Naive thymus-derived CD4-positive, alpha-beta T cell (primary cell): ENCODE measurements at regions of chr9 and their contacts with region 1.

Region 1: DNA sequence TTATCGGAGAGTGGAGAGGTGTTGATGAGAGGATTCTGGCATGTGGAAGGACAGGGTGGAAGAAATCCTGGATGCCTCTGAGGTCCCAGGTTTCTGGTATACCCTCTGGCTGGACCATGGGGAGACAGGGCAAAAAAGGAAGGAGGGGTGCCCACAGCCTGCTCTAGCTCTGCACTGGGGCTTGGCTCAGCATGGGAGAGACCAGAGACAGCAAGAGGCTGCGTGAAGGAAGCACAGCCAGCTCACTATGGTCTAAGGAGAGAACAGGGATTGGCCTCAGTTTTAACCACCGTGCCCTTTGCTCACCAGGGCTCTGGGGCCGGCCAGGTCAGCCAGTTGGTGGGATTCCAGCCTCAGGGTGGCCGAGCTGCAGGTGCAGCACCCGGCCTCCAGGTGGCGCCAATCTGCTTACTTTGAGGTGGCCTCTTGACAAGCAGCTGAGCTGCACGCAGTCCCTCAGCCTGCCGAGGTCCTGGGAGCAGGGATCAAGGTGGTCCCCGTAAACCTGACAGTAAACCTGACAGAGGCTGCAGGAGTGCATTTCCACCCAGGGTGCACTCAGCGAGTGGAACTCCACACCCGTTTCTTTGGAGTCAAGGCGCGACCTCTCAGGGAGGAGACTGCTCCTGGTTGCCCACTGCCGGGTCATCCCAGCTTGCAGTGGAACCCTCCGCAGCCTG is 25.0 kb upstream of the SPTLC1 start:
- DNase-seq: peak; percentile 45 to 79 (median 62)
- ATAC-seq: peak; percentile 77
- H3K4me3 ChIP-seq: peak overlapping the region; percentile 34
- H3K4me3 Mint-ChIP-seq: peak overlapping the region; percentile 62 to 84 (median 76)
- H3K27ac ChIP-seq: no peak overlapping the region
- H3K27ac Mint-ChIP-seq: no peak overlapping the region
- H3K4me1 ChIP-seq: peaks cover 4 to 8% of the 10 kb centered on the region in 2 donors
- H3K4me1 Mint-ChIP-seq: peaks cover 7 to 16% (median 10%) of the 10 kb centered on the region in 7 donors
- H3K27me3 ChIP-seq: peaks cover 0 to 4% of the 10 kb centered on the region in 2 donors
- H3K27me3 Mint-ChIP-seq: peaks cover 33 to 53% (median 43%) of the 10 kb centered on the region in 5 donors

Region 2: DNA sequence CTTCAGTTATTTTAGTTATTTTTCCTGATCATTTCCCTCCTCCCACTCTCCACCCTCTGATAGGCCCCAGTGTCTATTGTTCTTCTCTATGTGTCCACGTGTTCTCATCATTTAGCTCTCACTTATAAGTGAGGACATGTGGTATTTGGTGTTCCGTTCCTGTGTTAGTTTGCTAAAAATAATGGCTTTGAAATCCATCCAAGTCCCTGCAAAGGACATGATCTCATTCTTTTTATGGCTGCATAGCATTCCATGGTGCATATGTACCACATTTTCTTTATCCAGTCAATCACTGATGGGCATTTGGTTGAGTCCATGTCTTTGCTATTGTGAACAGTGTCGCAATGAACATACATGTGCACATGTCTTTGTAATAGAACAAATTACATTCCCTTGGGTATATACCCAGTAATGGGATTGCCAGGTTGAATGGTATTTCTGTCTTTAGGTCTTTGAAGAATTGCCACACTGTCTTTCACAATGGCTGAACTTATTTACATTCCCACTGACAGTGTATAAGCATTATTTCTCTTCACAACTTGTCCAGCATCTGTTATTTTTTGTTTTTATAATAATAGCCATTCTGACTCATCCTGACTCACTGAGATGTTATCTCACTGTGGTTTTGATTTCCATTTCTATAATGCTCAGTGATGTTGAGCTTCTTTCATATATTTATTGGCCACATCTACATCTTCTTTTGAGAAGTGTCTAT is 1480.4 kb before region 1 on chr9:
- CTCF ChIA-PET with region 1: no interaction called
- POLR2A ChIA-PET with region 1: no interaction called
- intact Hi-C with region 1: no loop called
- DNase-seq: no peak
- ATAC-seq: no peak
- H3K4me3 ChIP-seq: no peak overlapping the region
- H3K4me3 Mint-ChIP-seq: no peak overlapping the region
- H3K27ac ChIP-seq: no peak overlapping the region
- H3K27ac Mint-ChIP-seq: no peak overlapping the region
- H3K4me1 ChIP-seq: no peaks in the 10 kb centered on the region
- H3K4me1 Mint-ChIP-seq: no peaks in the 10 kb centered on the region
- H3K27me3 ChIP-seq: no peaks in the 10 kb centered on the region
- H3K27me3 Mint-ChIP-seq: peaks cover 27 to 36% (median 31%) of the 10 kb centered on the region in 5 donors

Region 3: GRCh38 chr9:91560285-91560684 is 579.9 kb before region 1 on chr9:
- CTCF ChIA-PET with region 1: no interaction called
- POLR2A ChIA-PET with region 1: no interaction called
- intact Hi-C with region 1: no loop called
- DNase-seq: no peak
- ATAC-seq: no peak
- H3K4me3 ChIP-seq: no peak overlapping the region
- H3K4me3 Mint-ChIP-seq: no peak overlapping the region
- H3K27ac ChIP-seq: no peak overlapping the region
- H3K27ac Mint-ChIP-seq: no peak overlapping the region
- H3K4me1 ChIP-seq: no peaks in the 10 kb centered on the region
- H3K4me1 Mint-ChIP-seq: no peaks in the 10 kb centered on the region
- H3K27me3 ChIP-seq: no peaks in the 10 kb centered on the region
- H3K27me3 Mint-ChIP-seq: peaks cover 21 to 56% (median 43%) of the 10 kb centered on the region in 5 donors

Region 4: GRCh38 chr9:91914405-91914804 is 225.8 kb before region 1 on chr9:
- CTCF ChIA-PET with region 1: no interaction called
- POLR2A ChIA-PET with region 1: no interaction called
- intact Hi-C with region 1: no loop called
- DNase-seq: no peak
- ATAC-seq: no peak
- H3K4me3 ChIP-seq: no peak overlapping the region
- H3K4me3 Mint-ChIP-seq: no peak overlapping the region
- H3K27ac ChIP-seq: no peak overlapping the region
- H3K27ac Mint-ChIP-seq: no peak overlapping the region
- H3K4me1 ChIP-seq: no peaks in the 10 kb centered on the region
- H3K4me1 Mint-ChIP-seq: peaks cover 0 to 12% (median 0%) of the 10 kb centered on the region in 7 donors
- H3K27me3 ChIP-seq: no peaks in the 10 kb centered on the region
- H3K27me3 Mint-ChIP-seq: peaks cover 16 to 46% (median 27%) of the 10 kb centered on the region in 5 donors

Region 5: DNA sequence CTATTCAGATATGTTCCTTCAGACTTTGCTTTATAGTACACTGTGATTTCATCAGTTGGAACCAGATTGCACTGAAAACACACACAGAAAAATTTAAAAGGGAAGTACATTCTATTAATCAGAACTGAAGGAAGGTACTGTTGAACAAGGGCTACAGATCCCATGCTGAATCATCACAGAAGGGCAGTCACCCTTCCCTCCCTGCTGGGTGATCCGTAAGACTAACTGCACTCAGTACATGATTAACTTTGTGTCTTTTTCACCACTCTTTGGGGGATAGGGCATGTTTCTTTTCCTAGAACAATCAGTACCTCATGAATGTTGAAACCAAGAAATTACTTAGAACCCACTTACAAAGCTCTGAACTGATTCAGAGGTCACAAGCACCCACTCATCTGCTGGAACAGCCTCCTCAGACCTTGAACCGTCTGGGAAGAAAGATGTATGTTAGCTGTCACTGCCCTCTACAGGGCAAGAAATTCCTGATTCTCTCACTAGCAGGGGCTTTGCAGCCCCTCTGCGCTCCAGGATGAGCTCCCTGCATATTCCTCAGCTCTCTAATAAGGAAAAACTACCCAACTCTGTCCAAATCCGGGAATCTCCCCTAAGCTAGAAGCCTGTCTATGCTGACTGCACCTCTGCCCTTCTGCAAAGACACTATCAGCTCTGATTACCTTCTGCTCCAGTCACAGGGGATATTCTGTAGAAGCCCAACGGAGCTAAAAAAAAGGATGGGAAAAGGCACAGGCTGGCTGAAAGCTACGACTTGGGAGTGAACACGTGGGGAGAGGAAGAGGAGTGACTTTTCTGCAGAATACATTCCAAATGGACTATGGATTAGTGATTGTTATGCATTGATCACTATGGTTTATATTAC is 102.3 kb after region 1 on chr9:
- CTCF ChIA-PET with region 1: no interaction called
- POLR2A ChIA-PET with region 1: no interaction called
- intact Hi-C with region 1: loop called in 1 of 2 experiments (anchors 2 kb)
- DNase-seq: no peak
- ATAC-seq: no peak
- H3K4me3 ChIP-seq: no peak overlapping the region
- H3K4me3 Mint-ChIP-seq: no peak overlapping the region
- H3K27ac ChIP-seq: no peak overlapping the region
- H3K27ac Mint-ChIP-seq: peak overlapping the region in 4 of 9 donors; percentile 21 to 81 (median 32)
- H3K4me1 ChIP-seq: no peaks in the 10 kb centered on the region
- H3K4me1 Mint-ChIP-seq: peaks cover 0 to 3% (median 0%) of the 10 kb centered on the region in 7 donors
- H3K27me3 ChIP-seq: no peaks in the 10 kb centered on the region
- H3K27me3 Mint-ChIP-seq: no peaks in the 10 kb centered on the region

Region 6: DNA sequence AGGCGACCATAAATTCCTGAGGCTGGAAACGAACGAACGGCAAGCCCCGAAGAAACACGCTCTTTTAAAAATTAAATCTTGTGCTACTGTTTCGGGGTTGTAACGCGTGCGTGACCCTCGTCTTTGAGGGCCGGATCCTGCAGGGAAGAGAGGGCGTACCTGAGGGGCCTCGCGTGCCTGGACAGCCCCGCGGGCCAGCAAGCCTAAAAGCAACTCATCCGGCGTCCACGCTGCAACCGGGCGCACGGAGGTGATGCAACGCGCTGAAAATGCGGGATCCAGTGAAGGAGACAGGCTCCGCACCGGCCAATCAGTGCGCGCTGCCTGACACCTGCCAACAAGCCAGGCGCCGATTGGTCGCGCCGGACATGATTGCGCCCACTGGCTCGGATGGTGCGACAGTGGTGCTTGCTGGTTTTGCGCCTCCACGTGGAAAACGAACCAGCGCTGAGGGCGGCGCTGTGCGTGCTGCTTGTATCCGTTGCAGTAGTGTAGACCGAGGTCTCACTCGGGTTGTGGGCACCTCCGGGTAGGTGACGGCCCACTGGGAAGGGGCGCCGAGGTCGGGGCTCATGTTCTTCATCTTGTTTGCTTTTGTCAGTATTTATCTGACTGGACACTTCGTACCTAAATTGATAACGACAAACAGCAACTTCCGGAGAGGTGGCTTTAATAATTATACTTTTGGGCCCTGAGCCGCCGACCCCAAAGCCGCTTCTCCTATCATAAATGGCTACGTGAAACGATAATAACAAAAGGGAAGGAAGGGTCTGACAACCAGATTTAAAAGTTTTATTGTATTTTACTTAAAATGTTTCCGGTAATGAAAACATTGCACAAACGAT is 153.5 kb after region 1 on chr9 and contains the start of gene IARS1:
- CTCF ChIA-PET with region 1: no interaction called
- POLR2A ChIA-PET with region 1: no interaction called
- intact Hi-C with region 1: loop called in 1 of 2 experiments (anchors 5 kb)
- DNase-seq: peak; percentile 97 to 100 (median 100)
- ATAC-seq: peak; percentile 98
- H3K4me3 ChIP-seq: peak within 1 kb of the TSS; percentile 61
- H3K4me3 Mint-ChIP-seq: peak within 1 kb of the TSS; percentile 85 to 99 (median 98)
- H3K27ac ChIP-seq: peak within 1 kb of the TSS; percentile 78
- H3K27ac Mint-ChIP-seq: peak within 1 kb of the TSS; percentile 95 to 100 (median 98)
- H3K4me1 ChIP-seq: peaks cover 17 to 33% of the 10 kb centered on the region in 2 donors
- H3K4me1 Mint-ChIP-seq: peaks cover 23 to 68% (median 62%) of the 10 kb centered on the region in 7 donors
- H3K27me3 ChIP-seq: no peaks in the 10 kb centered on the region
- H3K27me3 Mint-ChIP-seq: no peaks in the 10 kb centered on the region
- total RNA-seq, gene IARS1: 52.4 to 145 (median 97.7) TPM

Region 7: DNA sequence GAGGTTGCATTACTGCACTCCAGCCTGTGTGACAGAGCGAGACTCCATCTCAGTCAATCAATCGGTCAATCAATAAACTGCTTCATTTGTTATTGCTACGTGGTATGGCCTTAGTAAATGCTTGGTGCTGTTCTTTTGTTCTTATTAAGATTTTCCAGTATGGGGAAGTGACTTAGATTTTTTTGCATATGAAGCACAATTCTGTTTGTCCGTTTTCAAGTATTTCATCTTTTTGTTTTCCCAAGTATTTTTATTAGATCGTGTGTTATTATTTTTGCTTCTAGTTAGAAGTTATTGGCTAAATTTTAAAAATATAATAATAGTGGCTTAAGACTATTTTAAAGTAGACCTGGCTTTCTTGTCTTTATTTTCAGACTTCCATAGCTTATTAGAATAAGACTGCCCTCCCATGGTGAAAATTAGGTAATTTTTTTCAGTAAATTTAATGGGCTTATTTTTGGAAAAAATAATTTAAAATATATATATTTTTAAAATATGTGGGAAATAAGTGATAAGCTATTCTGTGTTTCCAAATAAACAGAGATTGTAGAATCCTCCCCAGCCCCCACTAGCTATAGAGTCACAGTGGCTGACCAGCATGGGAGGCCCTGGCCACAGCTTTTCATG is 298.8 kb after region 1 on chr9:
- CTCF ChIA-PET with region 1: interaction called, 4 read pairs
- POLR2A ChIA-PET with region 1: no interaction called
- intact Hi-C with region 1: loop called in 1 of 2 experiments (anchors 5 kb)
- DNase-seq: peak in 2 of 9 donors; percentile 10 to 29
- ATAC-seq: no peak
- H3K4me3 ChIP-seq: no peak overlapping the region
- H3K4me3 Mint-ChIP-seq: no peak overlapping the region
- H3K27ac ChIP-seq: no peak overlapping the region
- H3K27ac Mint-ChIP-seq: peak overlapping the region in 1 of 9 donors; percentile 57
- H3K4me1 ChIP-seq: peaks cover 0 to 9% of the 10 kb centered on the region in 2 donors
- H3K4me1 Mint-ChIP-seq: peaks cover 0 to 10% (median 0%) of the 10 kb centered on the region in 7 donors
- H3K27me3 ChIP-seq: no peaks in the 10 kb centered on the region
- H3K27me3 Mint-ChIP-seq: no peaks in the 10 kb centered on the region

Region 8: DNA sequence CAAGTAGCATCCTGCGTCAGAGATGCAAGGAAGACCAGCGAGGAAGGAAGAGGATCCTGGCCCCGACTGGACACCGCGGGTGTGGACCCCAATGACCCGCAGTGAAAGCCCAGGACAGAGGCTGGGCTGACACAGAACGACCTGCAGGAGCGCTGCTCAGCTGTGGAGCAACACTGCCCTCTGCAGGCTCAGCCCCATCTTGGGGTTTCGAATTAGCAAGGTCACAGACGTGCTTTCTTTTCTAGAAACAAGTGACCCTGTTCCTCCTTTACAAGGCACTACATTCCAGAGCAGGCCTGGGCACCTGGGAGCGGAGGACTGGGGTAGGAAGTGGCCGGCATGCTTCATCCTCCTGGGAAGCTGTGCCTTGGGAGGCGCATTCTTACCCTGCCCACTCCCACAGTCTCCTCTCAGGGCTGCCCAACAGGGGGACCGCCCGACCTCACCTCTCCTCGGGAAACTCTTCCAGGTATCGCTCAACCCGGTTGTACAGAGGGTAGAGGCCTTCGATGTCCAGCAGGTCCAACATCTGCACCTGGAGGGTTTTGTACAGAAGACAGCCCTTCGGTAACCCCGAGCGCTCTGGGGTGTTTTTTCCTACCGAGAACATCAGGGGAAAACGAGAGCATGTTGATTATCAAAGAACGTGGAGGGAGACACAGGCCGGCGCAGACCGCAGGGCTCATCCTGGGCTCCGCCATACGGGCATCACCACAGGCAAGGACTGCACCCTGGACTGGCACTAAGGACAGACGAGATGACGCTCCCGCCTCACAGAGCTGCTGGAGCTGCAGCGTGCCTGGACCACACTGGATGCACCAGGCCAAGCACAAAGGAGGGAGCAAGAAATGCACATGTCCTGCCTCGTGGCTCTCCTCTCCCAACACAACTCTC is 494.7 kb after region 1 on chr9:
- CTCF ChIA-PET with region 1: interaction called, 5 read pairs
- POLR2A ChIA-PET with region 1: no interaction called
- intact Hi-C with region 1: loop called in 1 of 2 experiments (anchors 1 kb)
- DNase-seq: peak; percentile 17 to 67 (median 46)
- ATAC-seq: peak; percentile 86
- H3K4me3 ChIP-seq: no peak overlapping the region
- H3K4me3 Mint-ChIP-seq: no peak overlapping the region
- H3K27ac ChIP-seq: no peak overlapping the region
- H3K27ac Mint-ChIP-seq: no peak overlapping the region
- H3K4me1 ChIP-seq: no peaks in the 10 kb centered on the region
- H3K4me1 Mint-ChIP-seq: peaks cover 0 to 12% (median 0%) of the 10 kb centered on the region in 7 donors
- H3K27me3 ChIP-seq: no peaks in the 10 kb centered on the region
- H3K27me3 Mint-ChIP-seq: no peaks in the 10 kb centered on the region

Region 9: DNA sequence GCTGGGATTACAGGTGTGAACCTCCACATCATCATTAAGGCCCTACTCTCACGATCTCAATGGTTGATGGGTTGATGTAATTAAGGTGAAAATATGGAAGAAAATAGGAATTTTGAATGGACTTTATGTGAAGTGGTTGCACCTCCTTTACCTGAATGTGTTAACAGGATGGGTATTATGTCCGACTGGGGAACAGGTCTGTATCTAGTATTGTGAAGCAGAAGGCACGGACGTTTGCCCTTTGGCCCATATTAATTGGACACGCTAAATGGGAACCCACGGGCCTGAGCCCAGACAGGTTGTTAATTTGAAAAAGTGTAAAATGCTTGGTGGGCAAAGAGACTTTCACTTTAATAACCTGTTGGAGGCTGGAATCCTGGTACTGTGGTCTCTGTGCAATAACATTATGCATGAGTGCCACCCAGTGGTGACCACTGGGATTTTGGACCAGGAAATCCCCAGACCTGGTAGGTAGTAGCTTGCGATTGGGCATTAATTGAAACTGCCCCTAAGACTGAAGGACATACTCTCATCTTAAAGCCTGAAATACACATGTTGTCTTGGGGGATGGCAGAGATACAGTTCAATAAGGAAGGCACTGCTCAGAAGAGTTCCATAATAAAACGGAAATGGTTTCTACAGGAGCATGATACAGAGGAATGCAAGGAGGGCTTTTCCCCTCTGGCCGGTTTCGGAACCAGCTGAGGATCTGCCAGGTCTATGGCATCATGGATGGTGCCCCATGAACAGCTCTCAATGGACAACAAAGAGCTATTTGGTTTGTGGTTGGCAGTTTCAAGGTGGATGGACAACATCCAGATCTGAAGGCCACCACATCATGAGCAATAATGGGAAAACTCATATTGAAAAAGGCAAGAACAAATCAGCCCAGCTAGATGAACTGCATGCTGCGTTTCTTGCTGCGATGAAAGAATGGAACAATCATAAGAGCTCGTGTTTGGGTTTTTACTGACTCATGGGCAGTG is 650.6 kb after region 1 on chr9:
- CTCF ChIA-PET with region 1: interaction called, 6 read pairs
- POLR2A ChIA-PET with region 1: no interaction called
- intact Hi-C with region 1: loop called (anchors 1 kb)
- DNase-seq: peak; percentile 53 to 79 (median 70)
- ATAC-seq: peak; percentile 97
- H3K4me3 ChIP-seq: no peak overlapping the region
- H3K4me3 Mint-ChIP-seq: peak overlapping the region in 1 of 10 donors; percentile 4
- H3K27ac ChIP-seq: no peak overlapping the region
- H3K27ac Mint-ChIP-seq: peak overlapping the region in 2 of 9 donors; percentile 37 to 78
- H3K4me1 ChIP-seq: no peaks in the 10 kb centered on the region
- H3K4me1 Mint-ChIP-seq: peaks cover 2 to 11% (median 7%) of the 10 kb centered on the region in 7 donors
- H3K27me3 ChIP-seq: no peaks in the 10 kb centered on the region
- H3K27me3 Mint-ChIP-seq: peaks cover 0 to 13% (median 6%) of the 10 kb centered on the region in 5 donors